ENCODE measurements at regions of chrX and their contacts with region 1.

Region 1: DNA sequence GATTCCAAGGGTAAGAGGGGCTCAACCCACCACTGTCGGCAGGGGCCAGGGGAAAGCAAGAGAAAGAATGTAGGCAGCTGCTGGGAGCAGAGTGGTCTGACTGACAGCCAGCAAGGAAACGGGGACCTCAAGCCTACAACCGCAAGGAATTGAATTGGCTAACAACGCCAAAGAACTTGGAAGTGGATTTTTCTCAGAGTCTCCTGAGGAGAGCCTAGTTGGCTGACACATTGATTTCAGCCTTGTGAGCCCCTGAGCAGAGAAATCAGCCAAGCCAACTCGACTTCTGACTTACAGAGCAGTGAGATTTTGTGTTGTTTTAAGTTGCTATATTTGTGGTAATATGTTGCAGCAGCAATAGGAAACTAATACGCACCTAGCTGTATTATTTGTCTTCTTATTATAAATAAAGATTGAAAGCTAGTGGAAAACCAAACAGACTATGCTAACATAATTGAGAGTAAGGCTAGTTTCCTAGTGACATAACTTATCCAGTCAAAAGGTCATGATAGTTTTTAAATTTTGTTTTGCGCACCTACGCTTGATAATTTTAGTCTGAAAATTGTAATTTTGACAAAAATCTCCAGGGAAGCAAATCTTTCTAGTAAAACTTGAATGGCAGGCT is 145.8 kb upstream of the HCCS start:
- DNase-seq: no peak
- ATAC-seq: no peak
- H3K4me3 ChIP-seq: no peak overlapping the region
- H3K27ac ChIP-seq: no peak overlapping the region
- H3K4me1 ChIP-seq: no peaks in the 10 kb centered on the region
- H3K27me3 ChIP-seq: no peaks in the 10 kb centered on the region
- CTCF ChIP-seq: no peak

Region 2: DNA sequence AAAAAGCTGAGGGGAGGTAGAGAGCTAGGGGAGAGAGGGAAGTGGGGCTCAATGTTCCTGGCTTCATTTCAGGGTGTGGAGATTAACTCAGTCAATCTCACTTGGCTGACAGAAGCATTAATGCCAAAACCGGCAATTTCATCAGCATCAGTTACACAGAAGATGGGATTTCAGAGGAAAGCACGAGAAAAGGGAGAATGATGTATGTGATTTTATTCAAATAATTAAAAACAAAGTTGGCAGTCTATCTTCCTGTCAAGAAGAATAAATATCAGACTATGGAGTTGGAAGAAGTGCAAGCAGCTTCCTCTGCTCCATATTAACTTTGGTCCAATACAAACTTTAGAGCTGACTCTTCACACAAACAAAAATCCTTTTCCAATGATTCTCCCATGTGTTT is 116.2 kb after region 1 on chrX:
- CTCF ChIA-PET with region 1: no interaction called
- POLR2A ChIA-PET with region 1: interaction called, 14 read pairs
- intact Hi-C with region 1: no loop called
- DNase-seq: no peak
- ATAC-seq: no peak
- H3K4me3 ChIP-seq: no peak overlapping the region
- H3K27ac ChIP-seq: no peak overlapping the region
- H3K4me1 ChIP-seq: no peaks in the 10 kb centered on the region
- H3K27me3 ChIP-seq: no peaks in the 10 kb centered on the region
- CTCF ChIP-seq: no peak

Region 3: DNA sequence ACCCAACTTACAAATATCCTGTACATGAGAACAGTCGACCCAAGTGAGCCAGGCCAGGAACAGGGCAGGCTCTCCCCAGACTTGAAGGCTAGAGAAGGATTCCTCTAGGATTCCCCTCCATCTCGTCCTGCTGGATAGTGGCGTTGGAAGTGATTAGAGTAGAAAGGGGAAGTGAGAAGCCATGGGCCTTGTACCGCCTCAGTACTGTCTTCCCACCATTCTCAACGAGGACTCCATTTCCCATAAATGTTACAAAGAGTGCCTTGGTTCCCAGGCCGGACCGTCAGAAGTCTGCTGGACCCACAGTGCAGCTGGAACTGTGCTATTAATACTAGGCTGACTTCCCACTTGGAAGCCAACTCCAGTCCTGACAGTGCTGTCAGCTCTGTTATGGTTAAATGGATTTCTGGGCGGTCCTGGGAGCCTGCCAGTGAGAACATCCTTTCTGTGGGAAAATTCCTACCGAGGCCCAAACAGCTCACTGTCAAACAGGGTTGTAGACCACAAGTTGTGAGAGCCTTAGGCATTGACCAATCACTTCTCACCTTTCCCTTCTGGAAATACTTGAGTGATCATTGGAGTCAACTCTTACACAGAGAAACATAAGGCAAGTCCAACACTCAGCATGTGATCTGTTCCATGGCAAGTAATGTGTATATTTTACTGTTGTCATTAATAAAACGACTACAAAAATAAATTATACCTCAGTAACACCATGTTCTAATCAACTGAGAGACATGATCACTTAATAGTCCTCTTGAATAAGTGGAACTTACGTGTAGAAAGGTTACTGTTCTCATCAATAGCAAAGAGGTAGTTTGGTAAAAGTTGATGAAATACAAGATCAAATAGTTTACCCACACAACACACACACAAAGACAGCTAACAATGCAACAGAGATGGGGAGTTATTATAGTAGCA is 386.3 kb after region 1 on chrX:
- CTCF ChIA-PET with region 1: no interaction called
- POLR2A ChIA-PET with region 1: no interaction called
- intact Hi-C with region 1: no loop called
- DNase-seq: no peak
- ATAC-seq: no peak; the same call in 1 of the 2 replicates
- H3K4me3 ChIP-seq: no peak overlapping the region
- H3K27ac ChIP-seq: 0 out of 2 replicates have a peak overlapping the region, but pooled peaks have one; percentile 25
- H3K4me1 ChIP-seq: peaks cover 11% of the 10 kb centered on the region; the same call in 1 of the 2 replicates
- H3K27me3 ChIP-seq: no peaks in the 10 kb centered on the region
- CTCF ChIP-seq: no peak